SK-N-SH (cell line): ENCODE measurements at regions of chr1 and their contacts with region 1.

Region 1: GRCh38 chr1:160219062-160219929 is 14.1 kb downstream of the PEA15 start:
- DNase-seq: peak; percentile 55
- H3K4me3 ChIP-seq: no peak overlapping the region; a peak in 1 of 4 replicates
- H3K27ac ChIP-seq: peak overlapping the region; percentile 31 to 55
- H3K4me1 ChIP-seq: peaks cover 11 to 18% of the 10 kb centered on the region in 2 experiments; a peak in 3 of 4 replicates
- H3K27me3 ChIP-seq: no peaks in the 10 kb centered on the region
- CTCF ChIP-seq: peak; percentile 72
- EP300 ChIP-seq: no peak
- RAD21 ChIP-seq: peak; percentile 81

Region 2: DNA sequence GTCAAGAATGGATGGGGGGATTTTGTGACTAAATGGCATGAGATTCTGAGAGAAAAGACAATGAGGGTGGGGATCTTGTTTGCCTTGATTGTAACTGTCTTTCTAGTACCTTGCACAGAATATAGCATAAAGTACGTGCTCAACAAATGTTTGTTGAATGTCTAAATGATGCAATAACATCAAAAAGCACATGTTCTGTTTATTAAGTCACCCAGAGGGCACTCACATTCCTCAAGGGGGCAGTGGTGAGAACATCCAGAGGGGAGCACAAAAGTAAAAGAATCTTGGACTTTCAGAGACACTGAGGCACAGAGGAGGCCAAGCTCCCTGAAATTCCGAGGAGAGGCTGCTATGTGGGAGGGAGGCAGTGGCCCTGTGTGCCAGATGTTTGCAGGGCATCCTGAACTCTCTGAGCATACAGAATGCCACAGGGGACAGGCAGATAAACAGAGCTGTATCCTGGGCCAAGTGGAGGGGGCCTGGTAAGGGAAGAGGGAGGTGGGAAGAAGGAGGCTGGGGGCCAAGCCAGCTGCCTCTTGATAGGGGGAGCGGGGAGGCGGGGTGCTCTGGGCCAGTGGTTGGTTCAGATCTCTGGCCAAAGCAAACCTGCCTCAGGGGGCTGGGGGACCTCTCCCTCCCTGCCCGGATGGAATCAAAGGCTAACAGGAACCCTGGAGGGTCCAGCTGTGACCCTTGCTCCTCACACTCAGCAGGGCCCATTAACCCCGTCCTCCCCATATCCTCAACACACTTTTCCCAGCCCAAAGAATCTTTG is 110.2 kb before region 1 on chr1:
- CTCF ChIA-PET with region 1: interaction called, 27 read pairs
- POLR2A ChIA-PET with region 1: no interaction called
- DNase-seq: peak; percentile 63
- H3K4me3 ChIP-seq: no peak overlapping the region
- H3K27ac ChIP-seq: no peak overlapping the region
- H3K4me1 ChIP-seq: peaks cover 0 to 9% of the 10 kb centered on the region in 2 experiments; a peak in 1 of 4 replicates
- H3K27me3 ChIP-seq: 0 out of 2 replicates have a peak, but pooled peaks cover 3% of the 10 kb centered on the region
- CTCF ChIP-seq: peak; percentile 64
- EP300 ChIP-seq: no peak
- RAD21 ChIP-seq: no peak

Region 3: GRCh38 chr1:160205242-160206035 is 13.9 kb before region 1 on chr1 and contains the start of gene PEA15:
- CTCF ChIA-PET with region 1: interaction called, 81 read pairs
- POLR2A ChIA-PET with region 1: interaction called, 6 read pairs
- DNase-seq: peak; percentile 96
- H3K4me3 ChIP-seq: peak within 1 kb of the TSS; percentile 94 to 97
- H3K27ac ChIP-seq: peak within 1 kb of the TSS; percentile 87 to 99
- H3K4me1 ChIP-seq: peaks cover 36 to 56% of the 10 kb centered on the region in 2 experiments
- H3K27me3 ChIP-seq: no peaks in the 10 kb centered on the region
- CTCF ChIP-seq: no peak
- EP300 ChIP-seq: peak in 1 of 2 experiments; percentile 39; a peak in 1 of 4 replicates
- RAD21 ChIP-seq: no peak
- polyA plus RNA-seq, gene PEA15: 322 and 382 TPM in 2 replicates

Region 4: GRCh38 chr1:160232911-160233310 is 13.6 kb after region 1 on chr1:
- CTCF ChIA-PET with region 1: interaction called, 73 read pairs
- POLR2A ChIA-PET with region 1: no interaction called
- DNase-seq: no peak
- H3K4me3 ChIP-seq: no peak overlapping the region
- H3K27ac ChIP-seq: no peak overlapping the region
- H3K4me1 ChIP-seq: no peaks in the 10 kb centered on the region
- H3K27me3 ChIP-seq: no peaks in the 10 kb centered on the region
- CTCF ChIP-seq: no peak
- EP300 ChIP-seq: no peak
- RAD21 ChIP-seq: no peak

Region 5: GRCh38 chr1:160238408-160238807 is 19.1 kb after region 1 on chr1:
- CTCF ChIA-PET with region 1: interaction called, 73 read pairs
- POLR2A ChIA-PET with region 1: interaction called, 3 read pairs
- DNase-seq: no peak
- H3K4me3 ChIP-seq: no peak overlapping the region
- H3K27ac ChIP-seq: no peak overlapping the region
- H3K4me1 ChIP-seq: no peaks in the 10 kb centered on the region
- H3K27me3 ChIP-seq: no peaks in the 10 kb centered on the region
- CTCF ChIP-seq: no peak
- EP300 ChIP-seq: no peak
- RAD21 ChIP-seq: no peak

Region 6: DNA sequence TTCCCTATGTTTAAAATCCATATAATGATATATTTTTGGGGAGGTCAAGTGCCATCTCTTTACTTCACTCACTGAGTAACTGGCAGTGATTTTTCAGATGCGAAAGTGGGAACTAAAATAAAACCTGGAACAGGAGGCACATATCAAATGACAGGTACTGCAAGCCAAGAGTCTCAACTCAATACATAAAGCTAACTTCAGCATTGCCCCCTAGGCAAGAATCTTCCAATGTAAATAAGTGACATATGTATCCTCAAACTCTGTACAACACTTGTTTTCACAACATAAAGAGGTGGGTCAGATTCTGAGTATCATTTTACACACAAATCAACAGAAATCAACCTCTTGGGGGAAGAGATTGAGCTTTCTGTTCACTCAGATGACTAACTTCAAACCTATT is 24.9 kb after region 1 on chr1:
- CTCF ChIA-PET with region 1: interaction called, 73 read pairs
- POLR2A ChIA-PET with region 1: interaction called, 4 read pairs
- DNase-seq: no peak
- H3K4me3 ChIP-seq: no peak overlapping the region
- H3K27ac ChIP-seq: no peak overlapping the region
- H3K4me1 ChIP-seq: peaks cover 0 to 8% of the 10 kb centered on the region in 2 experiments; a peak in 1 of 4 replicates
- H3K27me3 ChIP-seq: no peaks in the 10 kb centered on the region
- CTCF ChIP-seq: no peak
- EP300 ChIP-seq: no peak
- RAD21 ChIP-seq: no peak

Region 7: DNA sequence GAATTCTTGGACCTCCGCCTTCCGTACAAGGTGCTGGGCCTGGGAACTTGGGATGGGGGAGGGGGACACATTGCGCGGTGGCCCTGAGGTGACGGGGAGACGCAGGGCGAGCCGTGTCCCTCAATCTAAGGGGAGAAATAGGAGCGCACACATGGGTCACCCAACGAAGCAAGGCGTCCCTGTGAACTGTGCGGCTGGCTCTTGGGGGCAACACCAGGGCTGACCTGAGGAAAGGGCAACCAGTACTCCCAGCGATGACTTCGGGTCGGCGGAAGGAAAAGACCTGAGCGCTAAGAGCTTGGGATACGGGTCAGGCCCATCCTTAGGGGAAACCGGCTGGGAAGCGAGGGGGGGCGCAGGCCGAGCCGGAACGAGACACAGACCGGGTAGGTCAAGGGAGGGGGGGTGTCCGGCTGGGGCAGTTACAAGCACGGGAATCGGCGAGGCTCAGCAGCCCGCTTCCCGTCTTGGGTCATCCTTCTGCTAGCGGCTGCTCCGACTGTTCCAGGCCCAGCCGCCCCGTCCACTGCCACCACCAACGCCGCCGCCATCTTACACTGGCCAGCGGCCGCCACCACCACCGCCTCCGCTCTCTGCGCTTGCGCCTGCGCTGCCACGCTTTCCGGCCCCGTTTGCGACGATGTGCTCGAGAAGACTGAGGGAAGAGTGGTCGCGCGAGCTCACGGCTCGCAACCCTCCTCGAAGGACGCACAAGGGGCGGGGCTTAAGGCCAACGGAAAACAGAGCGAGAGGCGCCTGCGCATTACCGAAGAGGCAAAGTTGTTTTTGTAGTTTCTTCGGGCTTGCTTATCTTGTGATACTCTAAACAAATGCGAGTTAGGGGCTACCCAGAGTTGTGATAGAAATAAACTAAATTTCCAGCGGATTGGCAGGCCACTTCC is 42.8 kb after region 1 on chr1 and contains the start of gene DCAF8:
- CTCF ChIA-PET with region 1: interaction called, 12 read pairs
- POLR2A ChIA-PET with region 1: no interaction called
- DNase-seq: peak; percentile 94
- H3K4me3 ChIP-seq: peak within 1 kb of the TSS; percentile 93 to 95
- H3K27ac ChIP-seq: peak within 1 kb of the TSS; percentile 96
- H3K4me1 ChIP-seq: peaks cover 12 to 18% of the 10 kb centered on the region in 2 experiments
- H3K27me3 ChIP-seq: no peaks in the 10 kb centered on the region
- CTCF ChIP-seq: no peak
- EP300 ChIP-seq: no peak
- RAD21 ChIP-seq: no peak
- polyA plus RNA-seq, gene DCAF8: 108 and 150 TPM in 2 replicates